Right ventricle myocardium inferior (tissue), 1 donor: ENCODE measurements at regions of chr2 and their contacts with region 1.

Region 1: DNA sequence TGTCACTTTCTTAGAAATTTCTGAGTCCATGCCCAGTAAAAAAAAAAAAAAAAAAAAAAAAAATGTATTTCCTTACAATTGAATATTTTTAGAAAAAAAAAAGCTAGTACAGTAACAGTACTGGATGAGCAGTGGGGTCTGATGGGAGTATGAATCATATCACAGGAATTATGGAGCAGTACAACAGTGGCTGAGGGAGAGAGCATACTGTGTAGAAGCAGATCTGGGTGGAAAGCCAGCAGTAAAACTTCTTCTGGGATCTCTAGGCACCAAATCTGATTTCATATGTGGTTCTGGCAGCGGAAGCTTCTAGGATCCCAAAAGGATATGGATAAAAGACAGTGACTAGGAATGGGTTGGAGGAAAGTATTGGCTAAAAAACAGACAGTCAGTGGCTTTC is 414.9 kb upstream of the FSHR start:
- DNase-seq: no peak
- ATAC-seq: no peak

Region 2: DNA sequence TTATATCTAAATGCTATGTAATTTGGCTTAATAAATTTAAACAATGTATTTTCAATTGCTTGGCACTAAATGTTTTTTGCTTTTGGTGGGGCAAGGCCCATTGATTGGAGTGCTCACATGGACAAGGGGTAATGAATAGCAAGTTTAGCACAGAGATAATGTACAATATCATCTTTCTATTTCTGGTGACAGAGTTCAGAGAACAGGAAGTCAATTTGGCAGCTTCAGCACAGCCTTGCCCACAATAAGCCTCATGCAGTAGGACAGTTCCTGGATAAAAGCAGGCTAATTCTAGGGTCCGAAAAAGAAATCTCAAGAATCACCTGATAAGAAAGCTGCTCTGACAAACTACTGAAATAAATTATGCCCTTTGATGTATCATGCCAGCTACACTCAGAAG is 29.1 kb after region 1 on chr2:
- intact Hi-C with region 1: loop called (anchors 1 kb)
- DNase-seq: no peak
- ATAC-seq: no peak

Region 3: GRCh38 chr2:49861821-49862220 is 292.6 kb after region 1 on chr2:
- intact Hi-C with region 1: no loop called
- DNase-seq: no peak
- ATAC-seq: no peak